A673 (cell line): ENCODE measurements at regions of chr18 and their contacts with region 1.

Region 1: GRCh38 chr18:58691256-58691655 is 20.0 kb downstream of the MALT1 start:
- DNase-seq: no peak
- H3K4me3 ChIP-seq: no peak overlapping the region
- H3K27ac ChIP-seq: no peak overlapping the region
- H3K4me1 ChIP-seq: peaks cover 10% of the 10 kb centered on the region
- H3K27me3 ChIP-seq: no peaks in the 10 kb centered on the region
- CTCF ChIP-seq: no peak

Region 2: GRCh38 chr18:58603375-58604067 is 87.7 kb before region 1 on chr18:
- CTCF ChIA-PET with region 1: no interaction called
- POLR2A ChIA-PET with region 1: no interaction called
- intact Hi-C with region 1: no loop called
- DNase-seq: peak; percentile 47
- H3K4me3 ChIP-seq: no peak overlapping the region
- H3K27ac ChIP-seq: no peak overlapping the region
- H3K4me1 ChIP-seq: peaks cover 14% of the 10 kb centered on the region
- H3K27me3 ChIP-seq: no peaks in the 10 kb centered on the region
- CTCF ChIP-seq: no peak

Region 3: GRCh38 chr18:58871514-58872420 is 180.5 kb after region 1 on chr18:
- CTCF ChIA-PET with region 1: no interaction called
- POLR2A ChIA-PET with region 1: interaction called, 20 read pairs
- intact Hi-C with region 1: no loop called
- DNase-seq: no peak
- H3K4me3 ChIP-seq: no peak overlapping the region
- H3K27ac ChIP-seq: peak overlapping the region; percentile 16
- H3K4me1 ChIP-seq: peaks cover 41% of the 10 kb centered on the region
- H3K27me3 ChIP-seq: no peaks in the 10 kb centered on the region
- CTCF ChIP-seq: no peak

Region 4: DNA sequence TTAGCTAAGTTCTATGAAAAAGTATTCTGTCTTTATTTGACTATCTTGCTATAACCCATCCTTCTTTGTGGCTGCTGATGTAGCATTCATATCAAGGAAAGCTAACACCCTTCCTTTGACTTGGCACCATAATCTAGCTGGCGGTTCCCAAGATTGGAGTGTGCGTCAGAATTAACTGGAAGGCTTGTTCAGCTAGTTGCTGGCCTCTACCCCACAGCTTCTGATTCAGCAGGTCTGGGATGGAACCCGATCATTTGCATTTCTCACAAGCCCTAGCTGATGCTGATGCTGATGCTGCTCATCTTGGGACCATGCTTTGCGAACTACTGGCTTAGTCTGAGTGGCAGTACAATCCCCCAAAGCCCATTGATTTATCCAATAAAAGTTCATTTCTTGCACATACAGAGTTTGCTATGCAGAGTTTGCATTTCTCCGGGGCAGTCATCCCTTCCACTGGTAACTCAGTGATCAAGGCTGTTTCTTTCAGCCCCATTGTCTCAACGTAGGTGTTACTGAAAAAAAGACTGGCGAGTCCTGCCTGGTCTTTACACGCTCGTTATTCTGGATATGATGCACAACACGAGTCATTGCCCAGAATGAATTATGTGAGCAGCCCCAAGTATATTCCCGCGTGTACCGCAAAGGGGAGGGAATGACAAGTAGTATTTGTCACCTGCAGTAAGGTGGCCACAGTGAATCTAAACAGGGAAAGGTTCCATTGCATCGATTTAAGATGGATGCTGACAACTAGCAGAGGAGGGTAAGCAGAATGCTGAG is 269.9 kb after region 1 on chr18:
- CTCF ChIA-PET with region 1: no interaction called
- POLR2A ChIA-PET with region 1: no interaction called
- intact Hi-C with region 1: no loop called
- DNase-seq: no peak
- H3K4me3 ChIP-seq: no peak overlapping the region
- H3K27ac ChIP-seq: peak overlapping the region; percentile 27
- H3K4me1 ChIP-seq: peaks cover 31% of the 10 kb centered on the region
- H3K27me3 ChIP-seq: no peaks in the 10 kb centered on the region
- CTCF ChIP-seq: no peak